Lower leg skin (tissue), 4 donors: ENCODE measurements at regions of chr1 and their contacts with region 1.

Region 1: DNA sequence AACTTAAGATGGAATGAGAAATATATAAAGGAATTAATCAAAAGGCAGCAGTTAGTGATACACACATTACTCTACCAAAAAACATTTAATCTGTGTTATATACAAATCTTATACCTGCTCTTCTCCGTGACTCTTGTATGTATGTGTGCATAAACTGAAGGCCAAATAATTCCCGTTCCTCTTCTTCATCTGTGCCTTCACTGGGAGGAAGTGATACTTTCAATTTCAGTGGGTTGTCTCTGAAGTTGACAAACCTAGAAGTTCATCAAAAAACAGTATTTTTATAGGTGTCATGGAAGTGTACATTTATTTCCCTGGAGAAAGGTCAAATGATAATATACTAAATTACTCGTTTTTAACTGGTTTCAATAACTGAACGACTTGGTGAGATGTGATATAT is 19.3 kb downstream of the TRMT13 start:
- DNase-seq: no peak
- H3K4me3 ChIP-seq: no peak overlapping the region
- CTCF ChIP-seq: no peak
- POLR2A ChIP-seq: no peak

Region 2: GRCh38 chr1:99228153-99228552 is 924.1 kb before region 1 on chr1:
- intact Hi-C with region 1: loop called (anchors 10 kb)
- DNase-seq: no peak
- H3K4me3 ChIP-seq: no peak overlapping the region
- CTCF ChIP-seq: no peak
- POLR2A ChIP-seq: no peak

Region 3: GRCh38 chr1:100575406-100575805 is 423.1 kb after region 1 on chr1:
- intact Hi-C with region 1: no loop called
- DNase-seq: no peak
- H3K4me3 ChIP-seq: no peak overlapping the region
- CTCF ChIP-seq: no peak
- POLR2A ChIP-seq: no peak